ENCODE measurements at regions of chr16 and their contacts with region 1.

Region 1: GRCh38 chr16:30957456-30958174 is at the start of gene SETD1A:
- DNase-seq: peak; percentile 77 to 97 (median 89)
- ATAC-seq: peak; percentile 89
- H3K4me3 ChIP-seq: peak within 1 kb of the TSS; percentile 96
- H3K27ac ChIP-seq: peak within 1 kb of the TSS; percentile 99
- H3K4me1 ChIP-seq: peaks cover 27 to 35% of the 10 kb centered on the region in 2 experiments; a peak in 4 of 5 replicates
- H3K27me3 ChIP-seq: no peaks in the 10 kb centered on the region
- CTCF ChIP-seq: no peak
- EP300 ChIP-seq: peak; percentile 95
- POLR2A ChIP-seq: peak; percentile 74
- RAD21 ChIP-seq: no peak
- polyA plus RNA-seq, gene SETD1A: 0.08 to 0.14 TPM

Region 2: GRCh38 chr16:30122604-30123160 is 834.9 kb before region 1 on chr16:
- CTCF ChIA-PET with region 1: no interaction called
- POLR2A ChIA-PET with region 1: no interaction called
- in situ Hi-C with region 1: no loop called
- intact Hi-C with region 1: no loop called
- DNase-seq: peak in 3 of 4 experiments; percentile 13 to 77 (median 77)
- ATAC-seq: peak; percentile 34
- H3K4me3 ChIP-seq: peak overlapping the region; percentile 60
- H3K27ac ChIP-seq: peak overlapping the region; percentile 80; the same call in 2 of the 3 replicates
- H3K4me1 ChIP-seq: peaks cover 0 to 23% of the 10 kb centered on the region in 2 experiments; a peak in 4 of 5 replicates
- H3K27me3 ChIP-seq: no peaks in the 10 kb centered on the region
- CTCF ChIP-seq: no peak
- EP300 ChIP-seq: no peak
- POLR2A ChIP-seq: no peak
- RAD21 ChIP-seq: no peak

Region 3: DNA sequence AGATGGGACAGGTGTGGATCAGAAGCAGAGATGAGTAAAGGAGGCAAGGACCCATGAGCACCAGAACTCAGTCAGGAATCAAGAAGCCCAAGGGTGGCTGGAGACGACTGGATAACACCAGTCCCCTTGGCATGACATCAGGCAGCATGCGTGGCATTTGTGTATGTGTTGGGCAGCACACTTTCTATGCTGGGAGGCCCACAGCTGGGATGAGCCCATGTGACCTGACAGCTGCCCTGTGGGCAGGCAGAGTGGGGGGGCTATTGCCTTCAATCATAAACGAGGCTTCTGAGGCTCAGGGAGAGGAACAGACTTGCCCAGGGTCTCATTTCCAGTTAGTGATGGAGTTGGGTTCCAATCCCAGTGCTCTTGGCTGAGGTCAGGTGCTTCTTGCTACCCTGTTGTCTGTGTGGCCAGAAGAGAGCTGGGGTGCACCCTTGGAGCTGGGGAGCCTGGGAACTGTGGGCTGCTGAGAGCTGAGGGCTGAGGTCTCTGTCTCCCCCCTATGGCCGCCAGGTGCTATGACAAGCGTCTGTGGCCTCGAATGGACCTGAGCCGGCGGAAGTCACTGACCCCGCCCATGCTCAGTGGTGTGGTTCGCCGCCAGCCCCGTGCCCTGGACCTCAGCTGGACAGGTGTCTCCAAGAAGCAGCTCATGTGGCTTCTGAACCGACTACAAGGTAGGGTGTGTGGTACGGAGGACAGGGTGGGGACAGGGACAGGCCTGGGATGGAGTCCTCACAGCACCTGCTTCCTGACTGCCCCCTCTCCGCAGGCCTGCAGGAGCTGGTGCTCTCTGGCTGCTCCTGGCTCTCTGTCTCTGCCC is 15.8 kb before region 1 on chr16:
- CTCF ChIA-PET with region 1: no interaction called
- POLR2A ChIA-PET with region 1: interaction called, 11 read pairs
- in situ Hi-C with region 1: no loop called
- intact Hi-C with region 1: no loop called
- DNase-seq: peak; percentile 89 to 91 (median 90)
- ATAC-seq: peak; percentile 99
- H3K4me3 ChIP-seq: no peak overlapping the region
- H3K27ac ChIP-seq: peak overlapping the region; percentile 37
- H3K4me1 ChIP-seq: peaks cover 8 to 15% of the 10 kb centered on the region in 2 experiments; a peak in 4 of 5 replicates
- H3K27me3 ChIP-seq: no peaks in the 10 kb centered on the region
- CTCF ChIP-seq: peak; percentile 93 to 98 (median 95)
- EP300 ChIP-seq: no peak
- POLR2A ChIP-seq: no peak
- RAD21 ChIP-seq: peak; percentile 78 to 83

Region 4: DNA sequence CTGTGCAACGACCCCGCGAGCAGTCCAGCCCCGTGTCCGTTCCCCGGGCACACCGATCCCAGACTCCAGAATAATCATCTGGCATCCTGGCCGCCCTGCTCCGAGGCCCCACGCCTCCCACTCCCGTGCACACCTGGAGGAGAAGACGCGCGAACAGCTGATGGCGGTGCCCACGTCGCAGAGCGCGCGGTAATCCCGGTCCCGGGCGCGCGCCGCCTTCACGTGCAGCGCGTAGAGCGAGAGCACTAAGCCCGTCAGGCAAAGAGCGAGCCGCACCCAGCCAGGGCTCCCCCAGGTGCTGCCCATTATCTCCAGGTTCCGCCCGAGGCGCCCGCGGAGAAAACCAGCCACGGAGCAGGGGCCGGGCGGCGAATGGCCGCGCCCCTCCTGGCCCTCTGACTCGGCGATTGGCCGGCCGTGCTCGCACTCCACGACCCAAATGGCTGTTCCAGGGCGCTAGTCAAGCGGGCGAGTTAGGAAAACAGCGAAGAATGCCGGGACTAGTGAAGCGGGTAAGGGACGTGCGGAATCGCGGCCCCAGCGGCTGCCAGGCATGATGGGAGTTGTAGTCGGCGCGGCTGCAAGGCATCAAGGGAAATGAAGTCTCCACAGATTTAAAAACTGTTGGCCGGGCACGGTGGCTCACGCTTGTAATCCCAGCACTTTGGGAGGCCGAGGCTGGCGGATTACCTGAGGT is 137.0 kb after region 1 on chr16 and contains the start of gene VKORC1:
- CTCF ChIA-PET with region 1: no interaction called
- POLR2A ChIA-PET with region 1: no interaction called
- in situ Hi-C with region 1: no loop called
- intact Hi-C with region 1: loop called (anchors 10 kb)
- DNase-seq: peak; percentile 91 to 98 (median 93)
- ATAC-seq: peak; percentile 96
- H3K4me3 ChIP-seq: peak within 1 kb of the TSS; percentile 79
- H3K27ac ChIP-seq: peak within 1 kb of the TSS; percentile 70
- H3K4me1 ChIP-seq: peaks cover 17 to 32% of the 10 kb centered on the region in 2 experiments; a peak in 4 of 5 replicates
- H3K27me3 ChIP-seq: no peaks in the 10 kb centered on the region
- CTCF ChIP-seq: no peak
- EP300 ChIP-seq: no peak
- POLR2A ChIP-seq: peak; percentile 77
- RAD21 ChIP-seq: no peak
- polyA plus RNA-seq, gene VKORC1: 30.0 to 47.3 TPM

Region 5: DNA sequence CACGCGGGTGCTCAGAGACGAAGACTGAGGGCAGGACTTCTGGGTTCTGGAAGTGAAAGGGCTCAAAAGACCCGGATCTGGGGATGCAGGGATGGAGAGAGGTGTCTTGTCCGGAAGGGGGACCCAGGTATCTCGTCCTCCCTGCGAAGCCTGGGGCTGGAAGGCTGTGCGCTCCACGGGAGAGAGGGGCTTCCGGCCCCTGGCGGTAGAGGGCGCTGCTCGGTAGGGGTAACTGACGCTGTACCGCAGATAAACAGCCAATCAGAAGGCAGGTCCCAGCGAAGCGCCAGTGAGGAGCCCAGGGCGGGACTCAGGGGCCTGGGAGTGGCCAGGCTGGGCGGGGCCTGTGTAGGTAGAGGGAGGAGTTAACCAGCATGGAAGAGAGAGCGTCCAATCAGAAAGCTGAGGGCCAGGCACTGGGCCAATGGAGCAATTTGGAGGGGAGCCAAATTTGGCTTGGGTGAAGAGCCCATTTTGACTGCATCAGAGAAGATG is 515.1 kb after region 1 on chr16:
- CTCF ChIA-PET with region 1: no interaction called
- POLR2A ChIA-PET with region 1: no interaction called
- in situ Hi-C with region 1: no loop called
- intact Hi-C with region 1: no loop called
- DNase-seq: peak; percentile 71 to 86 (median 76)
- ATAC-seq: peak; percentile 64
- H3K4me3 ChIP-seq: no peak overlapping the region
- H3K27ac ChIP-seq: no peak overlapping the region
- H3K4me1 ChIP-seq: peaks cover 19 to 52% of the 10 kb centered on the region in 2 experiments; a peak in 4 of 5 replicates
- H3K27me3 ChIP-seq: no peaks in the 10 kb centered on the region
- CTCF ChIP-seq: peak in 1 of 3 experiments; percentile 26; a peak in 2 of 6 replicates
- EP300 ChIP-seq: no peak
- POLR2A ChIP-seq: no peak
- RAD21 ChIP-seq: no peak

Region 6: DNA sequence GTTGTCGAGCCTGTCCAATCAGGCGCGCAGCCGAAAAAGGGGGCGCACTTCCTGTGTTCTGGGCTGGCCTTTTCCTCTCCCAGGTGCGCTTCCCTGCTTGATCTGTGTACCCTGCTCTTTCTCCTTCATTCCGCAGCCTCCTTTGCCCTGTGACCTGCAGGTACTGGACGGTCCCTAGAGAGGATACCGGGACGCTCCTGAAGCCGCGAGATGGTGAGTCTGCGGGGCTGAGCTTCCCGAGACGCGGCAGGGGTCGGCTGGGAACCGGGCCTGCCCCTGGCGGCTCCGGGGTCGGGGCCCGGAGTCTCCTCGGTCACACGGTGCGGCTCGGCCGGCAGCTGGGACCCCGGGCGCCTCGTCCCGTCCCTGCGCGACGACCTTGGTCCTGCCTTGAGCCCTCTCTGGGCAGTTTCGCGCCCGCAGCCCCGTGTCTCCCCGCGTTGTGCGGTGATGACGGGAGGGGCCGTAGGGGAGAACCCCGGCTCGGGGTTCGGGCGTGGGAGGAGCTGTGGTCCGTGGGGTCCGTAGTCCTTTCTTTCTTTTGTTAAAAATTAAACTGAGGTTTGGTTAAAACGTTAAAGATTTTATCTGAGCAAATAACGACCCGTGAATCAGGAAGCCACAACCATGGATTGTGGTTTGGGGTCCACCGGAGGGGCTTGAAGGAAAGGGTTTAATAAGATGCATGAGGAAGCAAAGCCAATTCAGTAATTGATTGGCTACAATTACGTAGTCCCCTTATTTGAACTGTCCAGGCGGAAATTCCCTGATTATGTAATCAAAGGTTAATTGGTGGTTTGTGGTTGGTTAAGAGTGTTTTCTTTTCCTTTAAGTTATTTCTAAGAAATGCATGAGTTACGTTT is 743.1 kb after region 1 on chr16:
- CTCF ChIA-PET with region 1: no interaction called
- POLR2A ChIA-PET with region 1: no interaction called
- in situ Hi-C with region 1: loop called (anchors 10 kb)
- intact Hi-C with region 1: no loop called
- DNase-seq: peak in 3 of 4 experiments; percentile 39 to 93 (median 56)
- ATAC-seq: peak; percentile 71
- H3K4me3 ChIP-seq: peak overlapping the region; percentile 84
- H3K27ac ChIP-seq: peak overlapping the region; percentile 66
- H3K4me1 ChIP-seq: peaks cover 5 to 8% of the 10 kb centered on the region in 2 experiments; a peak in 3 of 5 replicates
- H3K27me3 ChIP-seq: no peaks in the 10 kb centered on the region
- CTCF ChIP-seq: 0 out of 6 replicates have a peak, but pooled peaks of 1 of the 3 experiments have one; percentile 19
- EP300 ChIP-seq: no peak
- POLR2A ChIP-seq: peak; percentile 79
- RAD21 ChIP-seq: no peak

Region 7: GRCh38 chr16:31873556-31874365 is 916.1 kb after region 1 on chr16 and contains the start of gene ZNF267:
- CTCF ChIA-PET with region 1: no interaction called
- POLR2A ChIA-PET with region 1: interaction called, 4 read pairs
- in situ Hi-C with region 1: loop called (anchors 25 kb)
- intact Hi-C with region 1: no loop called
- DNase-seq: peak; percentile 95 to 98 (median 98)
- ATAC-seq: peak; percentile 93
- H3K4me3 ChIP-seq: peak within 1 kb of the TSS; percentile 98
- H3K27ac ChIP-seq: peak within 1 kb of the TSS; percentile 98
- H3K4me1 ChIP-seq: peaks cover 10 to 37% of the 10 kb centered on the region in 2 experiments
- H3K27me3 ChIP-seq: no peaks in the 10 kb centered on the region
- CTCF ChIP-seq: no peak
- EP300 ChIP-seq: no peak
- POLR2A ChIP-seq: peak; percentile 96
- RAD21 ChIP-seq: no peak
- polyA plus RNA-seq, gene ZNF267: 18.1 to 22.2 TPM